ENCODE measurements at regions of chr22 and their contacts with region 1.

Region 1: DNA sequence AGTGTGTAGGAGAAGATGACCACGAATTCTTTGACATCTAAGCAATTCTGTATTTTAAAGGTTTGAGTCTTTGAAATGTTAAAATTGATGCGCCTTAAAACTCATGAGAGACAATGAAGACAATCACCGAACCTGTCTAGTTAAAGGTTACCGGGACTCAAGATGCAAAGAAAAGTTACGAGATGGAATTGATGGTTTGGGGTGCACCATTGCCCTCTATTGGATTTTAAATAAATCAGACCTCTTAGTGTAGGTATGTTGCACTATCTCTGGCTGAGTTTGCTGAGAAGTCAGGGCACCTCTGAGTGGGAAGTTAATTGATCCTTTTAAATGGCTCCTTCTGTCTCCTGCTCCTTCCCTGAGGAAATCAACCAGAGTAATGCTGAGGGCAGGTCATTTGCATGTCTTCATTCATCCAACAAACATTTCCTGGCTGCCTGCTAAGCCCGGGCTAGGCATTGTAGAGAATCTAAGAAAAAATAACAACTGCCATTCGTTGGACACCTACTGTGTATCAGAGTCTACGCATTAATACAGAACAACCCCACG is 19.4 kb upstream of the TMA7B start:
- DNase-seq: peak in 7 of 9 donors; percentile 56 to 81 (median 75)
- ATAC-seq: peak; percentile 76
- H3K4me3 ChIP-seq: peak overlapping the region; percentile 32
- H3K4me3 Mint-ChIP-seq: peak overlapping the region; percentile 39 to 84 (median 70)
- H3K27ac ChIP-seq: peak overlapping the region; percentile 79
- H3K27ac Mint-ChIP-seq: peak overlapping the region in 5 of 9 donors; percentile 80 to 99 (median 98)
- H3K4me1 ChIP-seq: peaks cover 85 to 96% of the 10 kb centered on the region in 2 donors
- H3K4me1 Mint-ChIP-seq: peaks cover 70 to 97% (median 93%) of the 10 kb centered on the region in 7 donors
- H3K27me3 ChIP-seq: no peaks in the 10 kb centered on the region
- H3K27me3 Mint-ChIP-seq: no peaks in the 10 kb centered on the region

Region 2: GRCh38 chr22:39559454-39560105 is 381.3 kb before region 1 on chr22:
- CTCF ChIA-PET with region 1: interaction called, 7 read pairs
- POLR2A ChIA-PET with region 1: interaction called, 4 read pairs
- intact Hi-C with region 1: loop called in 1 of 2 experiments (anchors 2 kb)
- DNase-seq: no peak
- ATAC-seq: no peak
- H3K4me3 ChIP-seq: no peak overlapping the region
- H3K4me3 Mint-ChIP-seq: peak overlapping the region in 1 of 10 donors; percentile 77
- H3K27ac ChIP-seq: no peak overlapping the region
- H3K27ac Mint-ChIP-seq: no peak overlapping the region
- H3K4me1 ChIP-seq: no peaks in the 10 kb centered on the region
- H3K4me1 Mint-ChIP-seq: peaks cover 5 to 15% (median 6%) of the 10 kb centered on the region in 7 donors
- H3K27me3 ChIP-seq: peaks cover 0 to 8% of the 10 kb centered on the region in 2 donors
- H3K27me3 Mint-ChIP-seq: peaks cover 15 to 44% (median 19%) of the 10 kb centered on the region in 5 donors

Region 3: GRCh38 chr22:39603345-39603744 is 337.5 kb before region 1 on chr22:
- CTCF ChIA-PET with region 1: no interaction called
- POLR2A ChIA-PET with region 1: interaction called, 3 read pairs
- intact Hi-C with region 1: loop called in 1 of 2 experiments (anchors 2 kb)
- DNase-seq: no peak
- ATAC-seq: no peak
- H3K4me3 ChIP-seq: no peak overlapping the region
- H3K4me3 Mint-ChIP-seq: peak overlapping the region in 2 of 10 donors; percentile 41 to 58
- H3K27ac ChIP-seq: no peak overlapping the region
- H3K27ac Mint-ChIP-seq: peak overlapping the region in 3 of 9 donors; percentile 12 to 72 (median 70)
- H3K4me1 ChIP-seq: peaks cover 3 to 24% of the 10 kb centered on the region in 2 donors
- H3K4me1 Mint-ChIP-seq: peaks cover 23 to 49% (median 42%) of the 10 kb centered on the region in 7 donors
- H3K27me3 ChIP-seq: no peaks in the 10 kb centered on the region
- H3K27me3 Mint-ChIP-seq: peaks cover 0 to 34% (median 0%) of the 10 kb centered on the region in 5 donors

Region 4: DNA sequence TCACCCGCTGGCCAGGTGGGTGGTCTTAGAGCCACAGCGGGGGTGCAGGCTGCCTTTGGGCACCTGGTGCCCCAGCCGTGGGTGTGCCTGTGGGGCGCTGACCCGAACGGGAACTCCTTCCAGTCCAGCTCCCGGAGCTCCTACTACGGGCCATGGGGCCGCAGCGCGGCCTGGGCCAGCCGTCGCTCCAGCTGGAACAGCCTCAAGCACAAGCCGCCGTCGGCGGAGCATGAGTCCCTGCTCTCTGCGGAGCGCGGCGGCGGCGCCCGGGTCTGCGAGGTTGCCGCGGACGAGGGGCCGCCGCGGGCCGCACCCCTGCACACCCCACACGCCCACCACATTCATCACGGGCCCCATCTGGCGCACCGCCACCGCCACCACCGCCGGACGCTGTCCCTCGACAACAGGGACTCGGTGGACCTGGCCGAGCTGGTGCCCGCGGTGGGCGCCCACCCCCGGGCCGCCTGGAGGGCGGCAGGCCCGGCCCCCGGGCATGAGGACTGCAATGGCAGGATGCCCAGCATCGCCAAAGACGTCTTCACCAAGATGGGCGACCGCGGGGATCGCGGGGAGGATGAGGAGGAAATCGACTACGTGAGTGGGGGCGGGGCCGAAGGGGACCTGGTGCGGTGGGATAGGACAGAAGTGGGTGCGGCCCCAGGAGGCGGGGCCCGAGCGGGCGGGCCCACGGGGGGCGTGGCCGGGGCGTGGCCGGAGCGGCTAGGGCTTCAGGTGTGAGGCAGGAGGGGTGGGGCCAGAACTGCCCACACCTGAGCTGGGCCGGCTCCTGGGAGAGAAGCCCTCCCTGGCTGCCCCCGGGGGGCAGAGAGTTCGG is 278.8 kb before region 1 on chr22:
- CTCF ChIA-PET with region 1: interaction called, 4 read pairs
- POLR2A ChIA-PET with region 1: interaction called, 3 read pairs
- intact Hi-C with region 1: loop called in 1 of 2 experiments (anchors 2 kb)
- DNase-seq: peak; percentile 75 to 91 (median 88)
- ATAC-seq: peak; percentile 93
- H3K4me3 ChIP-seq: peak overlapping the region; percentile 73
- H3K4me3 Mint-ChIP-seq: peak overlapping the region; percentile 75 to 92 (median 86)
- H3K27ac ChIP-seq: peak overlapping the region; percentile 74
- H3K27ac Mint-ChIP-seq: peak overlapping the region in 7 of 9 donors; percentile 76 to 97 (median 91)
- H3K4me1 ChIP-seq: peaks cover 15 to 58% of the 10 kb centered on the region in 2 donors
- H3K4me1 Mint-ChIP-seq: peaks cover 31 to 77% (median 64%) of the 10 kb centered on the region in 7 donors
- H3K27me3 ChIP-seq: no peaks in the 10 kb centered on the region
- H3K27me3 Mint-ChIP-seq: peaks cover 0 to 25% (median 4%) of the 10 kb centered on the region in 5 donors

Region 5: DNA sequence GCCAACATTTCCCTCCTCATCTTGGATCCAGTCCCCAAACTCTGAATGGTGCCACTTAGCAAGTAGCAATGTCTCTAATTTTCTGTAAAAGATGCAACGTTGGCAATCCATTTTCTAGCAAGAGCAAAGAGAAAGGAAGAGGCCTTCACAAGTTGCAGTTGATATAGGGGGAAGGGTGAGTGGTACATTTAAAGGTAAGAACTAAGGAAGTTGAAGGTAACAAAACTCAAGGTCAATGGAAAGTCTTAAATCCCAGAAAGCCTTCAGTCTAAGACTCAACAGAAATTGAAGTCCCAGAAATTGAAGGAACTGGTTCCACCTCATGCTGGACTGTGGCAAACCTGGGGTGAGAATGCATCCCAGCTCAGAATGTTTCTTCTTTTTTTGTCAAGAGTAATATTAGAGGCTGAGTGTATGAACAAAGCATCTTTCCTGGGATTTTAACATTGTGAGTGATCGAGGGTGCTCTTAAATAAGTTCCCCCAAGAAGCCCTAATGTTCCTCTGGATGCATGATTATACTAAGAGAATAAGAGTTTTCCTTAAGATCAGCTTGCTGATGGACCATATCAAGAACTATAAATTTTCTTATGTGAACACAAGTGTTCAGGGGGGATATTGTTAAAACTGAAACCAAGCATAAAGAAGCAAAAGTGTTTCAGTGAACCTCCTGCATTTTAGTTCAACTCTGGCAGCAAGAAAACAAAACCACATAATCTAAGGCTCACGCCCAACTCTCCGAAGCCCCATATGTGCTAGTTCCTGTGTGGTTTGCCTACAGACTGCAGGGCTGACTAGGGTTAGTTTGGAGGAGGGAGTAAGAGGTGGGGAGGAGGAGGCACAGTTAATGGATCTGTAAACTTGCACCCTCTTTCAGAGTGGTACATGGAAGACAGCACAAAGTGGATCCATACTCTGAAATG is 40.3 kb before region 1 on chr22 and contains the start of gene GRAP2:
- CTCF ChIA-PET with region 1: interaction called, 6 read pairs
- POLR2A ChIA-PET with region 1: interaction called, 27 read pairs
- intact Hi-C with region 1: loop called (anchors 1 to 5 kb)
- DNase-seq: peak in 8 of 9 donors; percentile 52 to 90 (median 86)
- ATAC-seq: peak; percentile 98
- H3K4me3 ChIP-seq: peak within 1 kb of the TSS; percentile 71
- H3K4me3 Mint-ChIP-seq: peak within 1 kb of the TSS in 9 of 10 donors; percentile 95 to 99 (median 97)
- H3K27ac ChIP-seq: peak within 1 kb of the TSS; percentile 83
- H3K27ac Mint-ChIP-seq: peak within 1 kb of the TSS in 6 of 9 donors; percentile 86 to 99 (median 96)
- H3K4me1 ChIP-seq: peaks cover 23 to 27% of the 10 kb centered on the region in 2 donors
- H3K4me1 Mint-ChIP-seq: peaks cover 13 to 31% (median 22%) of the 10 kb centered on the region in 7 donors
- H3K27me3 ChIP-seq: no peaks in the 10 kb centered on the region
- H3K27me3 Mint-ChIP-seq: no peaks in the 10 kb centered on the region
- total RNA-seq, gene GRAP2: 108 to 156 (median 145) TPM

Region 6: DNA sequence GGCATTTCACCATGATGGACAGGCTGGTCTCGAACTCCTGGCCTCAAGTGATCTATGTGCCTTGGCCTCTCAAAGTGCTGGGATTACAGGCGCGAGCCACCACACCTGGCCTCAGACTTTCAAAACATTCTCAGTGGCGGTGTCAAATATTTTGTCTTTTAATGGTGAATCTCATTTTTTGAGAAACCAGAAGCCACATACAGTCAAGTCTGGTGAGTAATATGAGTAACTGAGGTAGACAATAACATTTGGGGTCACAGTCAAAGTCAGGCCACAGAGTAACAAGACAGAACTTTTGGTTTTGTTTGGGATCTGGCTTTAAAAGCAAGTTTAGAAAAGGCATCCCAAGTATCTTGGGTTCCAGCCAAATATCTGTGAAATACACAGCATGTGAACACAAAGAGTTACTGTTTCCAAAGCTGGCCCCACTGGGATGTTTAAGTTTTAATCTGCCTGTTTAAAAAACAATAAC is 13.8 kb after region 1 on chr22:
- CTCF ChIA-PET with region 1: interaction called, 6 read pairs
- POLR2A ChIA-PET with region 1: interaction called, 18 read pairs
- intact Hi-C with region 1: loop called in 1 of 2 experiments (anchors 1 kb)
- DNase-seq: no peak
- ATAC-seq: no peak
- H3K4me3 ChIP-seq: no peak overlapping the region
- H3K4me3 Mint-ChIP-seq: peak overlapping the region in 5 of 10 donors; percentile 19 to 80 (median 38)
- H3K27ac ChIP-seq: peak overlapping the region; percentile 69
- H3K27ac Mint-ChIP-seq: peak overlapping the region in 5 of 9 donors; percentile 85 to 98 (median 94)
- H3K4me1 ChIP-seq: peaks cover 61 to 86% of the 10 kb centered on the region in 2 donors
- H3K4me1 Mint-ChIP-seq: peaks cover 69 to 97% (median 89%) of the 10 kb centered on the region in 7 donors
- H3K27me3 ChIP-seq: no peaks in the 10 kb centered on the region
- H3K27me3 Mint-ChIP-seq: no peaks in the 10 kb centered on the region

Region 7: DNA sequence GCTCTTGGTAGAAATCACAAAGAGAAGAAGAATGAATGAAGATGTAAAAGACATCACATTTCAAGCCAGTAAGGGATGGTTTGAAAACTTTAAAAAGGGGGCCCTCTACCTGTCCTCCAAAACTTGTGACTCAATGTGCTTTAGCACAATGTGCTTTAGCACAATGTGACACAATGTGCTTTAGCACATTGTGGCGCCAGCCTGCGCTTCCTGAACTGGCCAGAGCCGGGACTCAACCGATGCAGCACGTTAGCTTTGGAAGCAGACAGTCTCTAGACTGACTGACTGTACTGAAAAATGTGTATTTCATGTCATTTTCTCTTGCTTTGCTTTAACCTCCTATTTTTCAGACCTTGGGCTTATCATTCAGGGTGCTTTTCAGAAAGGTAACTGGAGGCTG is 117.4 kb after region 1 on chr22:
- CTCF ChIA-PET with region 1: no interaction called
- POLR2A ChIA-PET with region 1: no interaction called
- intact Hi-C with region 1: no loop called
- DNase-seq: no peak
- ATAC-seq: no peak
- H3K4me3 ChIP-seq: no peak overlapping the region
- H3K4me3 Mint-ChIP-seq: peak overlapping the region; percentile 13 to 67 (median 51)
- H3K27ac ChIP-seq: no peak overlapping the region
- H3K27ac Mint-ChIP-seq: peak overlapping the region in 6 of 9 donors; percentile 0 to 82 (median 40)
- H3K4me1 ChIP-seq: peaks cover 40 to 46% of the 10 kb centered on the region in 2 donors
- H3K4me1 Mint-ChIP-seq: peaks cover 43 to 91% (median 72%) of the 10 kb centered on the region in 7 donors
- H3K27me3 ChIP-seq: no peaks in the 10 kb centered on the region
- H3K27me3 Mint-ChIP-seq: no peaks in the 10 kb centered on the region

Measured in naive thymus-derived CD4-positive, alpha-beta T cell (primary cell).